GM12878 (cell line): ENCODE measurements at regions of chr13 and their contacts with region 1.

Region 1: GRCh38 chr13:109162248-109163053 is 533.0 kb downstream of the MYO16 start:
- DNase-seq: peak; percentile 98
- ATAC-seq: peak; percentile 84
- H3K4me3 ChIP-seq: peak overlapping the region; percentile 62
- H3K27ac ChIP-seq: peak overlapping the region; percentile 86
- H3K4me1 ChIP-seq: peaks cover 29% of the 10 kb centered on the region
- H3K27me3 ChIP-seq: no peaks in the 10 kb centered on the region
- CTCF ChIP-seq: 0 out of 6 replicates have a peak, but pooled peaks of 1 of the 3 experiments have one; percentile 4
- EP300 ChIP-seq: peak; percentile 99
- POLR2A ChIP-seq: no peak
- RAD21 ChIP-seq: 0 out of 2 replicates have a peak, but pooled peaks have one; percentile 15

Region 2: DNA sequence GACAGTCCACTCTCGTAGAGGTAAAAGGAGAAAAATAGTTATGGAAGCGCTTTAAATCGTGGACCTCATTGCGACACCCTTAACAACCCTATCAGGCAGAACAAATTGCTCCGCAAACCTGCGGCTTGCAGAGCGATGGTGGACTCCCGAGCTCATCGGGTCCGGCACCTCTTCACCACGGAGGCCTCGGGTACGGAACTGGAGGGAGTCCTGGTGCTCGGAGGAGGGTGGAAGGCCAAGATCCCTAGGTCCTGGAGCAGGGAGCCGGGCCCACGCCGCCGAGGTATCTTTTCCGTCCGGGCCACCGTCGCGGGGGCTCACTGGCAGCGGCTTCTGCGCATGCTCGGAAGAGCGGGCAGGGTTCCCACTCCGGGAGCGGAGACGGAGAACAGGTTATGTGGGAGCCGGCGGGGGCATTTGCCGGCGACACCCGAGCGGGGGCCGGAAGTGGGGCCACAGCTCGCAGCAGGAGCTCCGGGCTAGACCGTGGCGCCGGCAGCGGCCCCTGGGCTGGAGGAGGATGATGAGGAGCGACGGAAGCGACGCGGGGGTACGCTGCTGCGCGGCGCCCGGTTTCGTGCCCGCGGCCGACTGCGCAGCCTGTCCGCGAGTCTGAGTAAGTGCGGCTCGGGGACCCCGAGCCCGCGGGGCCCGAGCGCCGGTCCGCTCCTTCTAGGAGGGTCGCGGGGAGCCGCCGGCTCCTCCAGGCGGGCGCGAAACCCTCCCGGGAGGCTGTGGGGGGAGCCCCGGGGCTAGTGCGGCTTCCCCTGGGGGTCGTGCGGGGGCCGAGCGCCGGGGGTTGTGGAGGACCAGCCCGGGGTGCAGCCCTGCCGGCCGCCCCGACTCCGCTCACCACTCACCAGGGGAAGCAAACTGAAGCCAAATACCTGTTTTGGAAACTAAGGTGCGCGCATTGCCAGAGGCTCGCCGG is 944.1 kb before region 1 on chr13 and contains the start of gene ABHD13:
- CTCF ChIA-PET with region 1: no interaction called
- POLR2A ChIA-PET with region 1: no interaction called
- RAD21 ChIA-PET with region 1: no interaction called
- SMC1A ChIA-PET with region 1: no interaction called
- in situ Hi-C with region 1: no loop called
- intact Hi-C with region 1: loop called (anchors 5 kb)
- DNase-seq: peak; percentile 54
- ATAC-seq: peak; percentile 85
- H3K4me3 ChIP-seq: peak within 1 kb of the TSS; percentile 83
- H3K27ac ChIP-seq: peak within 1 kb of the TSS; percentile 87
- H3K4me1 ChIP-seq: peaks cover 19% of the 10 kb centered on the region
- H3K27me3 ChIP-seq: no peaks in the 10 kb centered on the region
- CTCF ChIP-seq: no peak
- EP300 ChIP-seq: peak in 1 of 2 experiments; percentile 26; a peak in 1 of 4 replicates
- POLR2A ChIP-seq: peak; percentile 88
- RAD21 ChIP-seq: no peak
- polyA plus RNA-seq, gene ABHD13: 3.2 to 3.9 TPM

Region 3: GRCh38 chr13:109151255-109151654 is 11.2 kb before region 1 on chr13:
- CTCF ChIA-PET with region 1: interaction called, 17 read pairs
- POLR2A ChIA-PET with region 1: interaction called, 4 read pairs
- RAD21 ChIA-PET with region 1: interaction called, 13 read pairs
- SMC1A ChIA-PET with region 1: interaction called, 55 read pairs
- in situ Hi-C with region 1: no loop called
- intact Hi-C with region 1: no loop called
- DNase-seq: no peak
- ATAC-seq: no peak
- H3K4me3 ChIP-seq: no peak overlapping the region
- H3K27ac ChIP-seq: no peak overlapping the region
- H3K4me1 ChIP-seq: no peaks in the 10 kb centered on the region
- H3K27me3 ChIP-seq: no peaks in the 10 kb centered on the region; a peak in 1 of 4 replicates
- CTCF ChIP-seq: no peak
- EP300 ChIP-seq: no peak
- POLR2A ChIP-seq: no peak
- RAD21 ChIP-seq: no peak

Region 4: GRCh38 chr13:109380457-109380856 is 218.0 kb after region 1 on chr13:
- CTCF ChIA-PET with region 1: no interaction called
- POLR2A ChIA-PET with region 1: no interaction called
- RAD21 ChIA-PET with region 1: no interaction called
- SMC1A ChIA-PET with region 1: no interaction called
- in situ Hi-C with region 1: no loop called
- intact Hi-C with region 1: no loop called
- DNase-seq: no peak
- ATAC-seq: no peak
- H3K4me3 ChIP-seq: no peak overlapping the region
- H3K27ac ChIP-seq: no peak overlapping the region
- H3K4me1 ChIP-seq: no peaks in the 10 kb centered on the region
- H3K27me3 ChIP-seq: no peaks in the 10 kb centered on the region
- CTCF ChIP-seq: no peak
- EP300 ChIP-seq: no peak
- POLR2A ChIP-seq: no peak
- RAD21 ChIP-seq: no peak

Region 5: GRCh38 chr13:109541081-109541480 is 378.6 kb after region 1 on chr13:
- CTCF ChIA-PET with region 1: no interaction called
- POLR2A ChIA-PET with region 1: no interaction called
- RAD21 ChIA-PET with region 1: no interaction called
- SMC1A ChIA-PET with region 1: no interaction called
- in situ Hi-C with region 1: no loop called
- intact Hi-C with region 1: no loop called
- DNase-seq: no peak
- ATAC-seq: no peak
- H3K4me3 ChIP-seq: no peak overlapping the region
- H3K27ac ChIP-seq: no peak overlapping the region
- H3K4me1 ChIP-seq: no peaks in the 10 kb centered on the region
- H3K27me3 ChIP-seq: no peaks in the 10 kb centered on the region
- CTCF ChIP-seq: no peak
- EP300 ChIP-seq: no peak
- POLR2A ChIP-seq: no peak
- RAD21 ChIP-seq: no peak

Region 6: GRCh38 chr13:109786457-109787134 is 624.1 kb after region 1 on chr13 and contains the start of gene IRS2:
- CTCF ChIA-PET with region 1: no interaction called
- POLR2A ChIA-PET with region 1: no interaction called
- RAD21 ChIA-PET with region 1: interaction called, 3 read pairs
- SMC1A ChIA-PET with region 1: no interaction called
- in situ Hi-C with region 1: no loop called
- intact Hi-C with region 1: loop called (anchors 5 kb)
- DNase-seq: no peak
- ATAC-seq: peak; percentile 92
- H3K4me3 ChIP-seq: peak within 1 kb of the TSS; percentile 32; the same call in 1 of the 2 replicates
- H3K27ac ChIP-seq: no peak within 1 kb of the TSS
- H3K4me1 ChIP-seq: no peaks in the 10 kb centered on the region
- H3K27me3 ChIP-seq: peaks cover 1 to 3% of the 10 kb centered on the region in 2 experiments; a peak in 3 of 4 replicates
- CTCF ChIP-seq: no peak
- EP300 ChIP-seq: no peak
- POLR2A ChIP-seq: peak; percentile 80
- RAD21 ChIP-seq: no peak
- polyA plus RNA-seq, gene IRS2: 0.03 TPM in 1 of 2 experiments, not detected in the other

Region 7: DNA sequence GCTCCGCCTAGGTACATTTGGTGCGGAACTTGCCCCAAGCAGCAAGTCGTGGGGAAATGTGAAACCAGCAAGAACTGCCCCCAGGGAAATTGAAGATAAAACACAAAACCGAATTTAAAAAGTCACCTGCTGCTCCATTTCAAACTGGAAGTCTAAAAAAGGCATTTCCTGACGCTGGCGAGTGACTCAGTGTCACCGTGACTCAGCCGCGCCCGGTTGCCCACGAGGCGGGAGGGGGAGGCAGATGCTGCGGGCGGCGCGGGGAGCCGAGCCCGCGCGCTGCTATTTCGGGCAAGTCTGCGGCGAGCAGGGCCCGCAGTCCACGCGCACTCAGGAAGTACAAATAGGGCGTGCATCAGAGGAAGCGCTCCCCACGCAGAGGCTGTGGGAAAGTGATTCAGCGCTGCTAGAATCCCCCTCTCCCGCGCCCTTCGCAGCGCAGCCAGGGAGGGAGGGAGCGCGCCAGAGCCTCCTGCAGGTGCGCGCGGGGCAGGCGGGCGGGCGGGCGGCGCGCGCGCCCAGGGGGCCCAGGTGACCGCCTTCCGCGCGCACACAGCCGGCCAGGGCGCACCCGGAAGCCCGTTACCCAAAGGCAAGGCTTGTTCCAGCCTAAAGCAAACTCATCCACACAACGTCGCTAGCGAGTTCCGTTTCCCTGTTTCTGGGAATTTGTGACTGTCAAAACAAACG is 975.7 kb after region 1 on chr13:
- CTCF ChIA-PET with region 1: no interaction called
- POLR2A ChIA-PET with region 1: no interaction called
- RAD21 ChIA-PET with region 1: interaction called, 4 read pairs
- SMC1A ChIA-PET with region 1: no interaction called
- in situ Hi-C with region 1: no loop called
- intact Hi-C with region 1: loop called (anchors 5 kb)
- DNase-seq: peak; percentile 36
- ATAC-seq: peak; percentile 73
- H3K4me3 ChIP-seq: peak overlapping the region; percentile 49
- H3K27ac ChIP-seq: 0 out of 2 replicates have a peak overlapping the region, but pooled peaks have one; percentile 18
- H3K4me1 ChIP-seq: peaks cover 9% of the 10 kb centered on the region; the same call in 1 of the 2 replicates
- H3K27me3 ChIP-seq: no peaks in the 10 kb centered on the region
- CTCF ChIP-seq: no peak
- EP300 ChIP-seq: peak in 1 of 2 experiments; percentile 6; a peak in 1 of 4 replicates
- POLR2A ChIP-seq: peak; percentile 32; the same call in 1 of the 2 replicates
- RAD21 ChIP-seq: no peak

Region 8: GRCh38 chr13:111153279-111153976 is 1991.0 kb after region 1 on chr13:
- CTCF ChIA-PET with region 1: no interaction called
- POLR2A ChIA-PET with region 1: no interaction called
- RAD21 ChIA-PET with region 1: no interaction called
- SMC1A ChIA-PET with region 1: no interaction called
- in situ Hi-C with region 1: loop called (anchors 25 kb)
- intact Hi-C with region 1: no loop called
- DNase-seq: no peak
- ATAC-seq: peak; percentile 85
- H3K4me3 ChIP-seq: peak overlapping the region; percentile 88
- H3K27ac ChIP-seq: peak overlapping the region; percentile 81
- H3K4me1 ChIP-seq: no peaks in the 10 kb centered on the region
- H3K27me3 ChIP-seq: no peaks in the 10 kb centered on the region
- CTCF ChIP-seq: peak; percentile 7 to 20 (median 7); a peak in 2 of 6 replicates
- EP300 ChIP-seq: no peak
- POLR2A ChIP-seq: peak; percentile 93
- RAD21 ChIP-seq: peak; percentile 39; the same call in 1 of the 2 replicates